Dorsolateral prefrontal cortex (tissue), 120 donors: ENCODE measurements at regions of chr2 and their contacts with region 1.

Region 1: GRCh38 chr2:101533561-101534148 is 58.7 kb upstream of the RFX8 start:
- DNase-seq: peak in 9 of 10 donors; percentile 70 to 93 (median 87)
- H3K4me3 ChIP-seq: peak overlapping the region in 40 of 59 donors; percentile 2 to 53 (median 21)
- H3K27ac ChIP-seq: peak overlapping the region; percentile 71 to 99 (median 96)
- H3K27me3 ChIP-seq: no peaks in the 10 kb centered on the region
- CTCF ChIP-seq: peak in 6 of 56 donors; percentile 10 to 32 (median 20)

Region 2: GRCh38 chr2:101238930-101239759 is 294.5 kb before region 1 on chr2:
- intact Hi-C with region 1: no loop called
- DNase-seq: no peak
- H3K4me3 ChIP-seq: no peak overlapping the region
- H3K27ac ChIP-seq: no peak overlapping the region
- H3K27me3 ChIP-seq: no peaks in the 10 kb centered on the region
- CTCF ChIP-seq: no peak

Region 3: GRCh38 chr2:101619191-101619591 is 85.5 kb after region 1 on chr2:
- intact Hi-C with region 1: loop called in 1 of 2 experiments (anchors 5 kb)
- DNase-seq: no peak
- H3K4me3 ChIP-seq: no peak overlapping the region
- H3K27ac ChIP-seq: no peak overlapping the region
- H3K27me3 ChIP-seq: no peaks in the 10 kb centered on the region
- CTCF ChIP-seq: no peak

Region 4: DNA sequence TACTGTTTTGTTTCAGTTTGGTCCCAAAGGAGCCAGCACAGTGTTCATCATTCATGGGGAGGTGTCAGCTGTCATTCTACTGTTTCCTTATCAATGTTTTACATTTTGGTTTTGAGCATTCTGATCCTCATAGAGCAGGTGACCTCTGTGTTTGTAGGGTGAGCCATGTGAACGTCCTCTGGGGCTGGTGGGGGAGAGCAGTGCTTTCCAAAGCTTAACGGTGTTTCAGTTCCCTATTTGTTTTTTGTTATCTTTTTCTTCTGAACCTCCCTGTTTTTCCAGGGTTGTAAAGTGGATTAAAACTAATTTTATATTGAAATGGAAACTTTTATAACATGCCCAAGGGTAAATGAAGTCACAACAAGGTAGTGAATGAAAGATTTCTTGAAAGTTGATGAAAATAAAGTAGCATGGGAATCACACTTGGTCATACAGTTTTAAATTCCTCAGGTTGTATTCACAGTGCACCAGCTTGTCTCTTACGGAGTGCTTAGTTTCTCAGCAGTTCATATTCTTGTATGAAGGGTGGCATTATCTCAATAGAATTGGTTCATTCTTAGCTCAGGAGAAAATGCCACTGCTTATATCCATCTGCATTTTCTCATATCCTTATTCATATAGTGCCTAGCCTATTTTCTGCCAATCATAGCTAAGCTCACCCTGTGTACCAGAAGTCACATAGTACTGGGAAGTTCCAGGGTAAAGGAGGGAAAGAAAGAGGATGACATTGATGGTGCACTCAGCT is 218.4 kb after region 1 on chr2:
- intact Hi-C with region 1: loop called in 1 of 2 experiments (anchors 5 kb)
- DNase-seq: no peak
- H3K4me3 ChIP-seq: peak overlapping the region in 35 of 59 donors; percentile 2 to 42 (median 20)
- H3K27ac ChIP-seq: peak overlapping the region; percentile 77 to 98 (median 93)
- H3K27me3 ChIP-seq: no peaks in the 10 kb centered on the region
- CTCF ChIP-seq: no peak